ENCODE measurements at regions of chr11 and their contacts with region 1.

Region 1: GRCh38 chr11:114036156-114036811 is 23.2 kb upstream of the ZBTB16 start:
- DNase-seq: peak; percentile 91 to 95
- H3K4me3 ChIP-seq: peak overlapping the region in 1 of 3 donors; percentile 17
- H3K27ac ChIP-seq: peak overlapping the region; percentile 64 to 94 (median 80)
- H3K4me1 ChIP-seq: peaks cover 23 to 27% of the 10 kb centered on the region in 2 donors
- H3K27me3 ChIP-seq: no peaks in the 10 kb centered on the region
- CTCF ChIP-seq: peak; percentile 78 to 97 (median 92)
- POLR2A ChIP-seq: peak in 1 of 2 donors; percentile 47

Region 2: DNA sequence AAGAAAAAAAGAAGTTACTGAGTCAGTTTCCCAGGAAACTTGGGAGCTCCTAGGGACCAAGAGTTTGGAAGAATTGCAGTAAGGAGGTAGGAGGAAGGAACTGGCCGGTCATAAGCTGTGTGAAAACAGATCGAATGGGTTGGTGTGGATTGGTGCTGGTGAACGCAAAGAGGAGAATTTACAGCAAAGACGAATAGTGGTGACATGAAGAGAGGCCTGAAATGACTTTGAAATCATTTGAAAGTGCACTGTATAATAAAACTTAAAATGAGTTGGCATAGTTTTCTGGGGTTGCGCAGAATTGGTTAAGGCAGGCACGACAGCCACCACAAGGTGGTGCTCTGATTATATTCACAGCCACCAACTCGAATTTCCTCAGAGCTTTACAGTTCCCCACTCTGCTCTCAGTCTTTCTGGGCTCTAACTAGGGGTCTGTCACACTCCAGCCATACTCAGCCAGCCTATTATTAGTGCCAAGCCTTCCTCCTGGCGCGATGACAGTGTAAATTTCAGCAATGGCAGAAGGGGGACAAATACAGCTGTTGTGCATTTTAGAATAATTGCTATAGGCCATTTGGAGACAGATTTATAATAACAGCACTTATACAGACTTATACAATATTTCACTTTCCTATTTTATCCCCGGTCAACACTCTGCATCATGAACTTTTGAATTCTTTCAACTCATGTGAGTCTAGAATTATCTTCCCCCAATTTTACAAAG is 140.0 kb before region 1 on chr11:
- intact Hi-C with region 1: loop called (anchors 10 kb)
- DNase-seq: peak; percentile 41 to 49
- H3K4me3 ChIP-seq: no peak overlapping the region
- H3K27ac ChIP-seq: peak overlapping the region in 1 of 3 donors; percentile 15
- H3K4me1 ChIP-seq: peaks cover 8 to 20% of the 10 kb centered on the region in 2 donors
- H3K27me3 ChIP-seq: no peaks in the 10 kb centered on the region
- CTCF ChIP-seq: peak; percentile 31 to 68 (median 64)
- POLR2A ChIP-seq: no peak

Region 3: GRCh38 chr11:113926273-113927197 is 109.7 kb before region 1 on chr11:
- intact Hi-C with region 1: no loop called
- DNase-seq: no peak
- H3K4me3 ChIP-seq: no peak overlapping the region
- H3K27ac ChIP-seq: no peak overlapping the region
- H3K4me1 ChIP-seq: no peaks in the 10 kb centered on the region
- H3K27me3 ChIP-seq: no peaks in the 10 kb centered on the region
- CTCF ChIP-seq: no peak
- POLR2A ChIP-seq: no peak

Measured in thyroid gland (tissue), 4 donors.